ENCODE measurements at regions of chr11 and their contacts with region 1.

Region 1: GRCh38 chr11:62705880-62706849 is 1.1 kb downstream of the BSCL2 start:
- DNase-seq: peak; percentile 89
- H3K4me3 Mint-ChIP-seq: peak overlapping the region; percentile 89
- H3K27ac Mint-ChIP-seq: peak overlapping the region; percentile 79
- H3K4me1 Mint-ChIP-seq: peaks cover 49% of the 10 kb centered on the region
- H3K27me3 Mint-ChIP-seq: no peaks in the 10 kb centered on the region

Region 2: GRCh38 chr11:62245271-62245753 is 460.9 kb before region 1 on chr11:
- intact Hi-C with region 1: no loop called
- DNase-seq: no peak
- H3K4me3 Mint-ChIP-seq: no peak overlapping the region
- H3K27ac Mint-ChIP-seq: no peak overlapping the region
- H3K4me1 Mint-ChIP-seq: no peaks in the 10 kb centered on the region
- H3K27me3 Mint-ChIP-seq: peaks cover 9% of the 10 kb centered on the region

Region 3: GRCh38 chr11:62402226-62402959 is 303.8 kb before region 1 on chr11:
- intact Hi-C with region 1: no loop called
- DNase-seq: peak; percentile 45
- H3K4me3 Mint-ChIP-seq: peak overlapping the region; percentile 69
- H3K27ac Mint-ChIP-seq: peak overlapping the region; percentile 77
- H3K4me1 Mint-ChIP-seq: peaks cover 25% of the 10 kb centered on the region
- H3K27me3 Mint-ChIP-seq: peaks cover 6% of the 10 kb centered on the region

Region 4: DNA sequence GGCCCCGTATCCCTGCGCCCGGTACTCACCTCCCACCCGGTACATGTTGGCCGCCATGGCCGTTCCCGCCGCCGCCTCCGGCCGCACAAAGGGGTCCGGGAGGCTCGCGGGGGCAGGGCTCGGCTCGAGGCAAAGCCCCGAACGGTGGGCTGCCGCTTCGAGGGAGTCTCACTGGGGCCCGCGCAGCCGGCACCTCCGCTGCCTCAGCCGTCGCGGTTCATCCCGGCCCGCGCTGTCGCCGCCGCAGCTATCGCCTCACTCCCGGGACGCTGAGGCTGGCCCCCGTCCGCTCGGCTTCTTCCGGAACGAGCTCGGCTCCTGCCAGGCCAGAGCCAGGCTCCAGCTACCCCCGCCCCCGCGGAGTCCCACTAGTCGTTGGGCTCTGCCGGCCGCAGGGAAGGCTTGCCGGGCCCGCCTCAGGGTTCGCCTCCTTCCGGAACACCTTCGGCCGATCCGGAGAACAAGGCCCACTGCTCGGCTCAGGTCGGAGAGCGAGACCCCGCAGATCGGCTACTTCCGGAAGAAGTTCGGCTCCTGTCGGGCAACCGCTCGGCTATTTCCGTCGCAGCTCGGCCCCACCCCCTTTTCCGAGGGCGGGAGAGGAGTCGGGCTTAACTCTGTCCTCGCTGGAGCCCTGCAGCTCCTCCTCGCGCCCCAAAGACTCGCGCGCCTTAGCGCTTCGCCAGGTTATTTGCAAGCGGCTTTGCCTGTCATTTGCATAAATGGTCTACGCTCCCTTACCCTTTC is 104.6 kb before region 1 on chr11 and contains the start of gene MTA2:
- intact Hi-C with region 1: loop called (anchors 1 kb)
- DNase-seq: peak; percentile 100
- H3K4me3 Mint-ChIP-seq: peak within 1 kb of the TSS; percentile 95
- H3K27ac Mint-ChIP-seq: peak within 1 kb of the TSS; percentile 92
- H3K4me1 Mint-ChIP-seq: peaks cover 54% of the 10 kb centered on the region
- H3K27me3 Mint-ChIP-seq: no peaks in the 10 kb centered on the region
- total RNA-seq, gene MTA2: 224 and 230 TPM in 2 replicates

Region 5: DNA sequence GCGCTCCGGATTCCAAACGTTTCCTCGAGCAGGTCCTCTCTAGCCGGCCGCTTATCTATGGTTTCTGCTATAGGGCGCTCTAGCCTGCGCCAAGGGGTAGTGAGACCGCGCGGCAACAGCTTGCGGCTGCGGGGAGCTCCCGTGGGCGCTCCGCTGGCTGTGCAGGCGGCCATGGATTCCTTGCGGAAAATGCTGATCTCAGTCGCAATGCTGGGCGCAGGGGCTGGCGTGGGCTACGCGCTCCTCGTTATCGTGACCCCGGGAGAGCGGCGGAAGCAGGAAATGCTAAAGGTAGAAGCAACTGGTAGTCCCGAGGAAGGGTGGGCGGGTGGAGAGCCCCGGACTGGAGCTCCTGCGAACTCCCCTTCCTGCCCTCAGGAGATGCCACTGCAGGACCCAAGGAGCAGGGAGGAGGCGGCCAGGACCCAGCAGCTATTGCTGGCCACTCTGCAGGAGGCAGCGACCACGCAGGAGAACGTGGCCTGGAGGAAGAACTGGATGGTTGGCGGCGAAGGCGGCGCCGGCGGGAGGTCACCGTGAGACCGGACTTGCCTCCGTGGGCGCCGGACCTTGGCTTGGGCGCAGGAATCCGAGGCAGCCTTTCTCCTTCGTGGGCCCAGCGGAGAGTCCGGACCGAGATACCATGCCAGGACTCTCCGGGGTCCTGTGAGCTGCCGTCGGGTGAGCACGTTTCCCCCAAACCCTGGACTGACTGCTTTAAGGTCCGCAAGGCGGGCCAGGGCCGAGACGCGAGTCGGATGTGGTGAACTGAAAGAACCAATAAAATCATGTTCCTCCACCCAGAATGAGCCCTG is 34.4 kb before region 1 on chr11 and contains the starts of genes LBHD1 and UQCC3:
- intact Hi-C with region 1: loop called (anchors 1 kb)
- DNase-seq: peak; percentile 75
- H3K4me3 Mint-ChIP-seq: peak within 1 kb of the TSS; percentile 97
- H3K27ac Mint-ChIP-seq: peak within 1 kb of the TSS; percentile 98
- H3K4me1 Mint-ChIP-seq: peaks cover 34% of the 10 kb centered on the region
- H3K27me3 Mint-ChIP-seq: no peaks in the 10 kb centered on the region
- total RNA-seq, gene LBHD1: 23.4 and 24.3 TPM in 2 replicates
- total RNA-seq, gene UQCC3: 8.9 and 11.4 TPM in 2 replicates

Region 6: DNA sequence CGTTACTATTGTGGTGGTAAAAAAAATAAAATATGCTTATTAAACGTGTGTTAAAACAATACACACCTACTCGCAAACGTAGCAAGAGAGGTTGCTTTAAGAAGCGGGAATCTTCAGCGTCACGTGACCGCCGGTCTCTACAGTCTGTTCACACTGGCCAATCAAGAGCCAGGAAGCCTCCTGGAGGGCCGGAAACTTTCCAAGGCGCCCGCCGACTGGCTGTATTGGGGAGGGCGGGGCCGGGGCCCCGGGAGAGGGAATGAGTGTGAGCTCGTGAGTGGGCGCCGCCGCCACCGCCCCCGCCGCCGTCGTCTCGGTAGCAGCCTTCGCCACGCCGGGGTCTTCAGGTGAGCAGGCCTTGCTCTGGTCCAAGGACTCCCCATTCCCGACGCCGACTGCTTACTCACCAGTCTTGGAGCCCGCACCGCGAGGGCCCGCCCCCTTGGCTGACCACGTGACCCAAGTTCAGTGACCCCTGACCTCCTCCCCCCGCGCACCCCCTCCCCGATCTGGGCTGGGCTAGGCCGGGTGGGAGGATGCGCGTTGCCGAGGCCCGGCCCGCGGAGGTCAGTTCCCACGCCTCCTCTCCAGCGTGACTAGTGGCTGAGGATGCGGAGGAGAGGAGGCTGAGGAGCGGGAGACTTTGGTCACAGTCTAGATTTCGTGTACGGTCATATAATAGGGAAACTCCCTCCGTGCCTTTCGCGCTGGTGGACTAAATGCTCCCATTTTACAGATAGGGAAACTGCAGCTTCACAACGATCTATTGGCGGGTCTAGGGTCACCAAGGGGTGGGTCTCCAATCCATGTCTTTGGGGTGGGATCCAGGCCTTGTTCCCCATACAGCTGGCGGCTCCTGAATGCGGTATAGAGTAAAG is 65.2 kb after region 1 on chr11 and contains the start of gene TAF6L:
- intact Hi-C with region 1: loop called (anchors 1 kb)
- DNase-seq: peak; percentile 91
- H3K4me3 Mint-ChIP-seq: peak within 1 kb of the TSS; percentile 89
- H3K27ac Mint-ChIP-seq: peak within 1 kb of the TSS; percentile 91
- H3K4me1 Mint-ChIP-seq: peaks cover 30% of the 10 kb centered on the region
- H3K27me3 Mint-ChIP-seq: no peaks in the 10 kb centered on the region
- total RNA-seq, gene TAF6L: 19.4 and 20.7 TPM in 2 replicates

Region 7: DNA sequence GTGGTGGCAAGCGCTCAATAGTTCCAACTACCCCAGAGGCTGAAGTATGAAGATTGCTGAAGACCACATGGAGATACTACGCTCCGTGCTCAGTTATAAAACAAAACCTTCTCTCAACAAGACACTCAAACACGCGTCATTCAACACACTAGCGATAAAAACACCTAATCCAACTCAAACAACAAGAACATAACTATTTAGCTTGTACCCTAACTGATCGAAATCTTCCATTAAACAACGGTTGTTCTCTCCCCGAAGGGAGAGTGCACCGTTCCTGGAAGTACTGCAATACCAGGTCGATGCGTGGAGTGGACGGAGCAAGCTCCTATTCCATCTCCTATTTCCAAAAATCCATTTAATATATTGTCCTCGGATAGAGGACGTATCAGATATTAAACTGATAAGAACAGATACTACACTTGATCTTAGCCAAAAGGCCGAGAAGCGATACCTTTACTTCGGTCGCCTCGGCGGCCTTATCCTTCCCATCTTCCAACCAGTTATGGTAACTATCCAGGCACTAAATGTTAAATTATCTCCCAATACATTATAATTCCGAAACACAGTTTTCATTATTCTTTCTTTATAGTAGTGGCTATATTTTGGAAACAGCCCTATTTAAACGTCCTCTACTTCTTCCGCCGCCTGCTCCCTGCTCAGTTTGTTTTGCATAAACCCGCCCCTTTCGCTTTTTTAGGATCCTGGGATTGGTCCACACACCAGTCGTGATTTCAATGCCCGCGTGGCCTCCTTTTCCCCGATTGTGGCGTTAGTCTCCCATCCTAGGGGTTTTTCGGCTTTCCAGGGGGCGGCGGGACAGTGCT is 135.4 kb after region 1 on chr11:
- intact Hi-C with region 1: loop called (anchors 1 kb)
- DNase-seq: peak; percentile 83
- H3K4me3 Mint-ChIP-seq: no peak overlapping the region
- H3K27ac Mint-ChIP-seq: no peak overlapping the region
- H3K4me1 Mint-ChIP-seq: peaks cover 18% of the 10 kb centered on the region
- H3K27me3 Mint-ChIP-seq: no peaks in the 10 kb centered on the region